ENCODE measurements at regions of chr1 and their contacts with region 1.

Region 1: GRCh38 chr1:9275567-9276034 is 17.1 kb upstream of the SPSB1 start:
- DNase-seq: peak; percentile 87 to 89
- ATAC-seq: peak; percentile 51
- H3K4me3 ChIP-seq: no peak overlapping the region
- H3K27ac ChIP-seq: no peak overlapping the region
- H3K4me1 ChIP-seq: no peaks in the 10 kb centered on the region
- H3K27me3 ChIP-seq: no peaks in the 10 kb centered on the region

Region 2: DNA sequence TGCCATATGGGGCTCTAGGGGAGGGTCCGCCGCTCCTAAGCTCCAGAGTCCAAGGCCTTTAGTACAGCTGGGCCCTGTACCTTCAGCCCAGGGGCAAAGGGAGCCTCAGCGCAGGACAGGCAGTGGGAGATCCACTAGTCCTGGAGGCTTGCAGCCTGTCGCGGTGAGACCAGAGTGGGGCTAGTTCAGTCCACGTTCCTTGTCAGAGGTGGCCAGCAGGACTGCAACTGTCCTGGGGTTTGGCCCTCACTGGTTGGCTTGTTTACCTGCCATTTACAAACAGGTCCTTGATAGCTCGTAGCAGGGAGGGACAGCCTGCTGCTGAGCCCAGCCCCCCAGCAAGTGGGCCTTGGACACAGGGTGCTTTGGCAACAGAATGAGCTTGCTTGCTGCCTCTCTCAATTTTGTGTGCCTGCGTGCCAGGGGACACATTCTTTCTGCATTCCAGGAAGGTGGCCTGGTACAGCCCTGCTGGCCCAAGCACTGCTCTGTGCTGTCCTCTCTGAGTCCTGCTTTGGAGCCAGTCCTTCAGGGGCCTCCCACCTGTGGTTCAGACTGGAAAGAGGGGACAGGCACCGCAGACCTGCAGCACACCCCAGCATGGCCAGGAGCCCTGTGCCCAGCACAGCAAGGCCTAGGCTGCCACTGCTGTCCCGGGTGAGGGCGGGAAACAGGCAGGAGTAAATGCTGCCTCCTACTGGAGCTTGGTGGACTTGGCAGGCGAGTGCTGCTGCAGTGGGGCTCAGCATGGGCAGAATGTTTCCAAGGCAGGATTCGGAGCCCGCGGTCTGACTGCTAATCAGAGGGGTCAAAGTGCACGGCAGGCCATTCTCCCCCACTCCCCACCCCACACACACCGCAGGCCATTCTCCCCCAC is 25.8 kb before region 1 on chr1:
- intact Hi-C with region 1: loop called in 1 of 2 experiments (anchors 1 kb)
- DNase-seq: peak in 1 of 2 donors; percentile 81
- ATAC-seq: peak; percentile 48
- H3K4me3 ChIP-seq: no peak overlapping the region
- H3K27ac ChIP-seq: peak overlapping the region in 1 of 2 donors; percentile 54
- H3K4me1 ChIP-seq: peaks cover 0 to 3% of the 10 kb centered on the region in 2 donors
- H3K27me3 ChIP-seq: no peaks in the 10 kb centered on the region

Region 3: GRCh38 chr1:9573723-9574122 is 298.1 kb after region 1 on chr1:
- intact Hi-C with region 1: loop called (anchors 10 kb)
- DNase-seq: no peak
- ATAC-seq: no peak
- H3K4me3 ChIP-seq: no peak overlapping the region
- H3K27ac ChIP-seq: no peak overlapping the region
- H3K4me1 ChIP-seq: no peaks in the 10 kb centered on the region
- H3K27me3 ChIP-seq: no peaks in the 10 kb centered on the region